ENCODE measurements at regions of chr12 and their contacts with region 1.

Region 1: GRCh38 chr12:121668750-121669520 is 519 bp downstream of the MORN3 start:
- DNase-seq: peak; percentile 57
- H3K4me3 Mint-ChIP-seq: no peak overlapping the region
- H3K27ac Mint-ChIP-seq: no peak overlapping the region
- H3K4me1 Mint-ChIP-seq: peaks cover 65% of the 10 kb centered on the region
- H3K27me3 Mint-ChIP-seq: no peaks in the 10 kb centered on the region

Region 2: DNA sequence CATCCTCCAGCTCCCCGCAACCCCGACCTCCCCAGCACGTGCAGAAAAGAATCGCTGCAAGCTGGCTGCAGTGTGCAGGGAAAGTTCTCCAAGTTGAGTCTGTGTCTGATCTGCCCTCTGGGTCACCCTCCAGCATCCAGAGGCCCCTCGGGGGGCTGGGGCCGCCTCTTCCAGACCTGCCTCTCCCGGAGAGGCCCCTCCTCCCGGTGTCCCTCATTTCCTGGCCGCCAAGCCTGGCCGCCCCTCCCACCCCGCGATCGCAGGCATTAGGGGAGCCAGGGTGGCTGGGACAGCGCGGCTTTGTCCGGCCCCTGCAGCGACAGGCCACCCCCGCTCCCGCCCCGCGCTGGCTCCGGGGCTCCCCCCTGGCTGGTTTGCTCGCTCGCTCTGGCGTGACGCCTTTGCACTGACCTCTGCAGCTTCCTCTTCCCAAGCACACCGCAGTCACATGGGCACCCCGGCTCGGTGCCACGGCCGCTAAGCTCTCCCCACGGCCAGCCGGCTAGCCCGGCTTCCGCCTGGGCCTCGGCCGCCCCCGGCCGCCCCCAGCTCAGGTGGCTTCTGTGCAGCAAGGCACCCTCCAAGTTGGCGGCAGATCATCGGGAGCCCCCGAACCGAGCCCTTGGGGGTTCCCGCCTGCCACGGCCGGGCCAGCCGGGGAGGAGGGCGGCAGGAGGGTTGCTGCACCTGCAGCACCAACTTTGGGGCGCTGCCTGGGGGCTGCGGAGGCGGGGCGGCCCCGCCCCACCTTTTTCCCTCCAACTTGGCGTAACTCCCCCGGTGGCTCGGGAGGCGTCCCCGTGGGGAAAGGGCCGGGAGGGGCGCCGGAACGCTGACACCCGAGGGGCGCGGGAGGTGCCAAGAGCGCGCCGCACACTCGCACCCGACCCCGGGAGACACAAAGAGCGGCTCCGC is 131.8 kb before region 1 on chr12:
- CTCF ChIA-PET with region 1: no interaction called
- POLR2A ChIA-PET with region 1: interaction called, 10 read pairs
- DNase-seq: peak; percentile 68
- H3K4me3 Mint-ChIP-seq: peak overlapping the region; percentile 74
- H3K27ac Mint-ChIP-seq: peak overlapping the region; percentile 63
- H3K4me1 Mint-ChIP-seq: peaks cover 54% of the 10 kb centered on the region
- H3K27me3 Mint-ChIP-seq: no peaks in the 10 kb centered on the region

Region 3: GRCh38 chr12:121649819-121650353 is 19.0 kb before region 1 on chr12:
- CTCF ChIA-PET with region 1: interaction called, 6 read pairs
- POLR2A ChIA-PET with region 1: interaction called, 13 read pairs
- DNase-seq: peak; percentile 58
- H3K4me3 Mint-ChIP-seq: no peak overlapping the region
- H3K27ac Mint-ChIP-seq: peak overlapping the region; percentile 80
- H3K4me1 Mint-ChIP-seq: peaks cover 43% of the 10 kb centered on the region
- H3K27me3 Mint-ChIP-seq: no peaks in the 10 kb centered on the region

Region 4: DNA sequence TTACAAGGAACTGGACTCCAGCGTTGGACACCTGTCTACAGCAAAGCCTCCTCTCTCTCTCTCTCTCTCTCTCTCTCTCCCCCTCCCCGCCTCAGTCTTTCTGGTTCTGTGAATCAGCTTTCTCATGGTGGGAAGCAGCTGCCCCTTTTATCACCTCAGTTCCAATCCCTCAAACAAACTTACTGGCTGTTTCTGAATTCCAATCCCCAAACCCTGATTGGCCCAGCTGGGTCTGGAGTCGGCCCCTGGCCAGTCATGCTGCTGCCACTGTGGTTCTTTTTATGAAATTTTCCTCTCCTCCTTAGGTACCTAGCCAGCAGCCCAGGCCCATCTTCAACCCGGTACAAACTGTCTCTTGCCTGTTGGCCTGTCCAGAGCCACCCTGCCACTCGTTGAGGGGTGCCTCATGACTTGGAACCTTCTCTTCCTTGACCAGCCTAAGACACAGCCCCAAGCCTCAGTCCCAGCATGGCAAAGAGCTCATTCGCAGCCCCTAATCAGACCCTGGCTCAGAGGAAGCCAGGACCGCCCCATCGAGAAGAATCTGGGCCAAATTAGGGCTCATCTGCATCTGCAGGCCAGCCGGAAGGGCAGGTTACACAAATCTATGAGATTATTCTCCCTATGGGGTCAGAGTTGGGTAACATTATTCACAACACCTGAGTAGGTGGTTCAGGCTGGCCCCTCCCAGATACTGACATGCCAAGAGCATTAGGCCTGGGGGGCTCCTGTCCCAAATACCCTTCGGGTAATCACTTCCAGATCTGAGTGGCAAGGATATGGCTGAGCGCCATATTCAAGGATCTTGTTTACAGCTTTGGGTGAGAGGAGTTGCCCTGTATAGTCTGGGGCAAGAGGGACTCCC is 10.0 kb after region 1 on chr12:
- CTCF ChIA-PET with region 1: interaction called, 17 read pairs
- POLR2A ChIA-PET with region 1: no interaction called
- DNase-seq: no peak
- H3K4me3 Mint-ChIP-seq: no peak overlapping the region
- H3K27ac Mint-ChIP-seq: no peak overlapping the region
- H3K4me1 Mint-ChIP-seq: peaks cover 11% of the 10 kb centered on the region
- H3K27me3 Mint-ChIP-seq: no peaks in the 10 kb centered on the region

Region 5: GRCh38 chr12:121697098-121697698 is 28.3 kb after region 1 on chr12:
- CTCF ChIA-PET with region 1: no interaction called
- POLR2A ChIA-PET with region 1: no interaction called
- DNase-seq: no peak
- H3K4me3 Mint-ChIP-seq: no peak overlapping the region
- H3K27ac Mint-ChIP-seq: no peak overlapping the region
- H3K4me1 Mint-ChIP-seq: peaks cover 2% of the 10 kb centered on the region
- H3K27me3 Mint-ChIP-seq: no peaks in the 10 kb centered on the region

Region 6: DNA sequence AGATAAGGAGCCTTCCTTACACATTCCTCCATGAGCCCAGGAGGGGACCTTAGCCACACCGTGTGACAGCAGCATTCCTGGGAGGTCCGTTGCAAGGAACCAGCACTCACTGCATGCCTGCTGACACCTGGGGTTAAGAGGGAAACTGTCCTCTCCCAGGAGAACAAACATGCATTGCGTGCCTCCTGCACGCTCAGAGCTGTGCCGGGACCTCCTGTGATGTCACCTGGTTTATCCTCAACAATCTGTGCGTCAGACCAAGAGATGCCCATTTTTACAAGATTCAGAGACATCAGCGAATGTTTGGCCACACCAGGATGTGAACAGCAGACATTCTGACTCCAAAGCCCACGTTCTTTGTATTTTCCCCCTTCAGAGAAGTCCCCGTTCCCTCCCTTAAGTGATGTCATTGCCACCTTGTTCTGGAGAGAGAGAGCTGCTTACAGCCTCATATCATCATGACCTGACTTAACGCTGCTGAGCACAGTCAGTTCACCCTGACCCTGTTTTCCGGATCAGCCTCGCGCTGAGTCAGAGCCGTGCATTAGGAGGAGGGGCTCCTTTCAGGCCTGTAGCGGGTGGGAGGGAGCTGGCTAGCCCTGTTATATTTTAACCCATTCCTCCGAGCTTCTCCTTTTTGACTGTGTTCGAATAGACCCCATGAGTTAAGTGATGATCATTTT is 79.8 kb after region 1 on chr12:
- CTCF ChIA-PET with region 1: no interaction called
- POLR2A ChIA-PET with region 1: no interaction called
- DNase-seq: no peak
- H3K4me3 Mint-ChIP-seq: no peak overlapping the region
- H3K27ac Mint-ChIP-seq: peak overlapping the region; percentile 32
- H3K4me1 Mint-ChIP-seq: peaks cover 2% of the 10 kb centered on the region
- H3K27me3 Mint-ChIP-seq: no peaks in the 10 kb centered on the region

Region 7: GRCh38 chr12:121802846-121803630 is 134.1 kb after region 1 on chr12:
- CTCF ChIA-PET with region 1: no interaction called
- POLR2A ChIA-PET with region 1: interaction called, 10 read pairs
- DNase-seq: peak; percentile 92
- H3K4me3 Mint-ChIP-seq: peak overlapping the region; percentile 81
- H3K27ac Mint-ChIP-seq: peak overlapping the region; percentile 100
- H3K4me1 Mint-ChIP-seq: peaks cover 36% of the 10 kb centered on the region
- H3K27me3 Mint-ChIP-seq: no peaks in the 10 kb centered on the region

Region 8: GRCh38 chr12:121812921-121813896 is 144.3 kb after region 1 on chr12:
- CTCF ChIA-PET with region 1: no interaction called
- POLR2A ChIA-PET with region 1: no interaction called
- DNase-seq: peak; percentile 37
- H3K4me3 Mint-ChIP-seq: peak overlapping the region; percentile 81
- H3K27ac Mint-ChIP-seq: peak overlapping the region; percentile 73
- H3K4me1 Mint-ChIP-seq: peaks cover 47% of the 10 kb centered on the region
- H3K27me3 Mint-ChIP-seq: no peaks in the 10 kb centered on the region